OCI-LY7 (cell line): ENCODE measurements at regions of chr7 and their contacts with region 1.

Region 1: DNA sequence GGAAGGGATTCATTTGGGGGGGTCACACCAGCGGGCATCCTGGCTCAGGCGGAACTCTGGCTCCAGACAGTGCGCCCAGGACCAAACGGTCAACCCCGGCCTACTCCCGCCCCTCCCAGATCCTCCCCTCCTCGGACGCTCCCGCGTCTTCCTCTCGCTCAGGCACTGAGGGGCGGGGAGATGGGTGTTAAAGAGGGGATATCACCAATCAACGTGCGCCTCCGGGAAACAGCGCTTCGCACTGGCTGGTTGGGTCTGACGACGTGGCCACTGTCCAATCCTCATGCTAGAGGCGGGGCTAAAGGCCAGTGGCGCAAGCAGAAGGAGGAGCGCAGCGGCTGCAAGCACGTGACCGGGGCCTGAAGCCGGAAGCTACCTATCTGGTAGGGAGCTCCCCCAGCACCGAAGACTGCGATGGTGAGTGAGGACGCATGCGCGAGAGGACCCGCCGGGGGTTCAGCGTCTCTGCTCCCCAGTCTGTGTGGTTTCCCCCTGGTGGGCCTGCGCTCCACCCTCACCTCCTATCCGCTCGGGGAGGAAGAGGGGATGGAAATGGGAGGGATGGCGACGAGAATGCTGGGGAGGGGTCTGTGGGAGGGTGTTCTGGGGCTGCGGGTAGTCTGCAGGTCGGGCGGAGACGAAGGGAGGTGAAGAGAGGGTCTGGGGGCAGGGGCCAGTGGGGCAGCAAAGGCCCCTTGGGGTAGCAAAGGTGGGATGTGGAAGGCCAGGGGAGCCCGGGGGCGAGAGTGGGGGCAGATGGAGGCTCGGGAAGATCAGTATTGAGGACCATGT is at the start of gene LAMTOR4:
- DNase-seq: peak; percentile 100
- H3K4me3 ChIP-seq: peak within 1 kb of the TSS; percentile 84
- H3K27ac ChIP-seq: peak within 1 kb of the TSS; percentile 66
- H3K4me1 ChIP-seq: peaks cover 39% of the 10 kb centered on the region
- CTCF ChIP-seq: no peak
- total RNA-seq, gene LAMTOR4: 243 and 263 TPM in 2 replicates

Region 2: GRCh38 chr7:100119062-100119700 is 29.6 kb before region 1 on chr7 and contains the starts of genes CNPY4 and TAF6:
- CTCF ChIA-PET with region 1: no interaction called
- POLR2A ChIA-PET with region 1: interaction called, 10 read pairs
- intact Hi-C with region 1: no loop called
- DNase-seq: peak; percentile 98
- H3K4me3 ChIP-seq: peak within 1 kb of the TSS; percentile 80
- H3K27ac ChIP-seq: peak within 1 kb of the TSS; percentile 73
- H3K4me1 ChIP-seq: peaks cover 13% of the 10 kb centered on the region
- CTCF ChIP-seq: no peak
- total RNA-seq, gene CNPY4: 20.9 and 24.5 TPM in 2 replicates
- total RNA-seq, gene TAF6: 28.0 and 35.4 TPM in 2 replicates

Region 3: DNA sequence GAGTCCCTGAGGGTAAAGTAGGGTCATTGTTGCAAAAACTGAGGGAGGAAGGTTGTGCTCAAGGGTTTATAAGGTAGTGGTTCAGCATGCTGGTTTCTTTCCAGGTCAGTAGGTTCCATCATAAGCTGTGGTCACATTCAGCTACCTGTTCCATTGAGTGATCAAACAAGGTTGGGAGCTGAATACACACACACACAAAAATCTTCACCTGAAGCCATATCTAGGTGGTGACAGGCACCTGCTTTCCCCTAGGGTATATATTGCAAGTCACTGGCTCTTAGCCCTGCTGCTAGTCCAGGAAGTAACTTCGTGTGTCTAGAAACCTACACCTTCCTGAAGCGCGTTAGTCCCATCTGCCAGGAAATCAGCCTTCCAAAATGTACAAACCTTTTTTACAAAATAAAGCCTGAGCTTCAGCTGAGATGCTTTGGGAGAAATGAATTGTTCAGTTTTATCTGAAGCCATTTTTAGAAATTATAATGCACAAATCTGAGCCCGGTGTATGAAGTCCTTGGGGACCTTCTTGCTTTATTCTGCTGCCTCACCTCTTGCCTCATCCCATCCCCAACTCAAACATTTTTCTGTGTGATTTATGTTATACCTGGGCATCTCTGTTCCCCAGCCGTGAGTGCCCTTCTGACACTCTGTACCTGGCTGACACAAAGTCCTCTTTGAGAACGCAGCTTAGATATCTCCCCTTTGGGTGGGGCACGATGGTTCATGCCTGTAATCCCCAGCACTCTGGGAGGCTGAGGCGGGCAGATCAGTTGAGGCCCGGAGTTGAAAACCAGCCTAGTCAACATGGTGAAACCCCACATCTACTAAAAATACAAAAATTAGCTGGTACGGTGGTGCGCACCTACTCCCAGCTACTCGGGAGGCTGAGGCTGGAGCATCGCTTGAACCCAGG is 10.6 kb before region 1 on chr7:
- CTCF ChIA-PET with region 1: interaction called, 3 read pairs
- POLR2A ChIA-PET with region 1: interaction called, 34 read pairs
- intact Hi-C with region 1: no loop called
- DNase-seq: peak; percentile 84
- H3K4me3 ChIP-seq: peak overlapping the region; percentile 40
- H3K27ac ChIP-seq: peak overlapping the region; percentile 71
- H3K4me1 ChIP-seq: peaks cover 35% of the 10 kb centered on the region
- CTCF ChIP-seq: no peak